H1 (cell line): ENCODE measurements at regions of chr5 and their contacts with region 1.

Region 1: GRCh38 chr5:160199410-160199911 is 29.8 kb upstream of the FABP6 start:
- DNase-seq: peak in 1 of 2 experiments; percentile 93
- H3K4me3 ChIP-seq: peak overlapping the region in 3 of 4 experiments; percentile 5 to 51 (median 22); a peak in 5 of 8 replicates
- H3K27ac ChIP-seq: no peak overlapping the region
- H3K4me1 ChIP-seq: peaks cover 7 to 29% (median 17%) of the 10 kb centered on the region in 4 experiments
- H3K27me3 ChIP-seq: no peaks in the 10 kb centered on the region
- CTCF ChIP-seq: peak; percentile 77 to 90 (median 87)
- EP300 ChIP-seq: peak in 1 of 2 experiments; percentile 81; a peak in 1 of 3 replicates
- POLR2A ChIP-seq: no peak
- RAD21 ChIP-seq: peak; percentile 82 to 90

Region 2: DNA sequence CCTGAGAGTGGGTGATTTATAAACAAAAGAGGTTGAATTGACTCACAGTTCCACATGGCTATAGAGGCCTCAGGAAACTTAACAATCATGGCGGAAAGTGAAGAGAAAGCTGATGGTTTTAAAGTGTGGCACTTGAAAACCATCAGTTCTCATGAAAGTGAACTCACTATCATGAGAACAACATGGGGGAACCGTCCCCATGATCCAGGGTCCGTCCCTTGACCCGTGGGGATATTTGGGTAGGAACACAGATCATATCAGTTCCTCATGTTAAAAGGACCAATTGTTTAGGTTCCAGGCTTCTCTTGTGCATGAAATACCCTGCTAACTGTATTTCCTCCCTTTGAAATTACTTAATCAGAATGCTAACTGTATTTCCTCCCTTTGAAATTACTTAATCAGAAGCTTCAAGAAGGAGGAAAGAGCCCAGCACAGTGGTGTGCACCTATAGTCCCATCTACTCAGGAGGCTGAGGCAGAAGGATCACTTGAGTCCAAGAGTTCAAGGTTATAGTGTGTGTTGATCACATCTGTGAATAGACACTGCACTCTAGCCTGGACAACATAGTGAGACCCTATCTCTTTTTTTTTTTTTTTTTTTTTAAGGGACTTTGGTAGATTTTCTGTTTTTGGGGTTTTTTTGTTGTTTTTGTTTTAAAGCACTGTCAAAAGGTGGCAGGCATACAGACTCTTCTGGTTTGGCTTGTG is 165.8 kb before region 1 on chr5:
- CTCF ChIA-PET with region 1: no interaction called
- POLR2A ChIA-PET with region 1: no interaction called
- DNase-seq: no peak
- H3K4me3 ChIP-seq: no peak overlapping the region
- H3K27ac ChIP-seq: no peak overlapping the region
- H3K4me1 ChIP-seq: no peaks in the 10 kb centered on the region; a peak in 1 of 7 replicates
- H3K27me3 ChIP-seq: peaks cover 0 to 2% (median 0%) of the 10 kb centered on the region in 4 experiments; a peak in 1 of 7 replicates
- CTCF ChIP-seq: no peak
- EP300 ChIP-seq: no peak
- POLR2A ChIP-seq: no peak
- RAD21 ChIP-seq: no peak

Region 3: DNA sequence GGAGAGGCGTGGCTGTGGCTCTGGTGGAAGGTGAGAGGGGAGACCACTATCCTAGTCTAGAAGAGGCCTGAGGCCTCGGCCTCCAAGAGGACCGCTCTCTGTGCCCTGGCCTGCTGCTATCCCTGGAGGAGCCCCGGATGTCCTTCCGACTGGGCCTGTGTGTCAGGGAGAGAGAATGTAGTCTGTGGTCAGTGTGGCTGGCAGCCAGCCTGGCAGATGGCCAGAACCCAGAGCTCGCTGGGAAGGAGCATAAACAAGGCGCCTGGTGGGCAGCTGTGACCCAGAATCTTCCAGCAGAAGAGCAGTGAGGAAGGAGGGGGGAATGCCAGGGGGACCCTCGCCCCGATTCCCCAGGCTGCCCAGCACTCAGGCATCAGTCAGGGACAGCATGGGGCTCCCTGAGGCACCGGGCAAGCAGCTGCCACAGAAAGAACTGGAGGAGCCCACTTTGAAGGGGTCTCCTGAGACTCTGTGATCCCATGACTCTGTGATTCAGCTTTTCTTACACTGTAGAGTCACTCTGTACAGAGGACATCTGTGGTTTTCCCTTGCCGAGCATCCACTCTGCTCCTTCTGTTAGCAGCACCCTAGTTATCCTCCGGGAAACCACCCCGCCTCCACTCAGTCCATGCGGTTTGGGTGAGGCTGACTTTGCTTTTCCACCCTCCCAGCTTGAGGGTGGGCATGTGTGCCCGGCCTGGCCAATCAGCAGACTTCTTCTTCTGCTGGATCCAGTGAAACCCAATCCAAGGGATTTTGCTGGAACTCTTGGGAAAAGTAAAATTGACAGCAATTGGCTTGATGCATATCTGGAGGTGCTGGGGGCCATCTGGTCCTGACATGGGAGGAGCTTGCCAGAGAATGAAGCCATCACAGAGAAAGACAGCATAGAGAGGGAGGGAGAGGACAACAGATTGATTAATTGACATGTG is 34.1 kb before region 1 on chr5:
- CTCF ChIA-PET with region 1: interaction called, 10 read pairs
- POLR2A ChIA-PET with region 1: interaction called, 6 read pairs
- DNase-seq: peak in 1 of 2 experiments; percentile 73
- H3K4me3 ChIP-seq: peak overlapping the region in 2 of 4 experiments; percentile 12 to 48; a peak in 2 of 8 replicates
- H3K27ac ChIP-seq: peak overlapping the region; percentile 90
- H3K4me1 ChIP-seq: peaks cover 20 to 37% (median 28%) of the 10 kb centered on the region in 4 experiments
- H3K27me3 ChIP-seq: no peaks in the 10 kb centered on the region
- CTCF ChIP-seq: no peak
- EP300 ChIP-seq: 0 out of 3 replicates have a peak, but pooled peaks of 1 of the 2 experiments have one; percentile 13
- POLR2A ChIP-seq: peak in 1 of 2 experiments; percentile 73; a peak in 1 of 3 replicates
- RAD21 ChIP-seq: no peak

Region 4: GRCh38 chr5:160188142-160189015 is 11.1 kb before region 1 on chr5:
- CTCF ChIA-PET with region 1: interaction called, 22 read pairs
- POLR2A ChIA-PET with region 1: interaction called, 55 read pairs
- DNase-seq: peak in 1 of 2 experiments; percentile 86
- H3K4me3 ChIP-seq: peak overlapping the region; percentile 27 to 53 (median 31); a peak in 6 of 8 replicates
- H3K27ac ChIP-seq: peak overlapping the region; percentile 81
- H3K4me1 ChIP-seq: peaks cover 0 to 7% (median 3%) of the 10 kb centered on the region in 4 experiments; a peak in 6 of 7 replicates
- H3K27me3 ChIP-seq: no peaks in the 10 kb centered on the region
- CTCF ChIP-seq: no peak
- EP300 ChIP-seq: peak in 1 of 2 experiments; percentile 8; a peak in 1 of 3 replicates
- POLR2A ChIP-seq: peak; percentile 39 to 71
- RAD21 ChIP-seq: peak; percentile 7 to 26; a peak in 1 of 4 replicates

Region 5: DNA sequence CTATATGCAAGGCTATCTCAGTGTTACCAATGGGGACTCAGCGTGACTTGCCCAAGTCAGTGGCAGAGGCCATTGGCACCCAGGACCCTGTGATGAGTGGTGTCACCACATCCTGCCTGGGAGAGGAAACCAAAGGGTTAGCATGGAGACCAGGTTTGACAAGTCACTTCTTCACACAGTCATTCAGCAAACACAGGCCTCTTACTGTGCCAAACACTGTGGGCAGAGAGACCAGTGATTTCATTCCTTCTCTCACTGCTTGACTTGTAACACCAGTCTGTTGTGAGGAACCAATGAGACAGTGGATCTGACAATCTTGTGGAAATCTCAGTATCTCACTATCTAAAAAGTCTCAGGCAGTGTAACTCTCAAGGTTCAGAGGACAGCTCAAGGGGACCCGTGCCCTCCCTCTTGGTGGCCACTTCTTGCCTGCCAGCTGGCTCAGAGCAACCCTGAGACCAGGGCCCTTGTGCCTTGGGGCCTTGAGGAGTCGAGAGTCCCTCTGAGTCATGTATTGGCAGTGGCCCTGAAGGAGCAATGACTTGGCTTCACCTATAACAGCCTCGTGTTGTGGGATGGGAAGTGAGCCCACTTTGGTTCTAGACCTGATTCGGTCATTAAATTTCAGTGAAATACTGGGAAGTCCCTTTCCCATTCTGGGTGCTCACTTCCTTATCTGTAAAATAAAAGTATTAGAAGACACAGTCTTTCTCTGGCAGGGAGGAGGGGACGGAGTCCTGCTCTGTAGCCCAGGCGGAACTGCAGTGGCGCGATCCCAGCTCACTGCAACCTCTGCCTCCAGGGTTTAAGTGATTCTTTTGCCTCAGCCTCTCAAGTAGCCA is 31.4 kb after region 1 on chr5:
- CTCF ChIA-PET with region 1: interaction called, 12 read pairs
- POLR2A ChIA-PET with region 1: no interaction called
- DNase-seq: no peak
- H3K4me3 ChIP-seq: no peak overlapping the region
- H3K27ac ChIP-seq: no peak overlapping the region
- H3K4me1 ChIP-seq: peaks cover 0 to 6% (median 2%) of the 10 kb centered on the region in 4 experiments; a peak in 3 of 7 replicates
- H3K27me3 ChIP-seq: no peaks in the 10 kb centered on the region
- CTCF ChIP-seq: no peak
- EP300 ChIP-seq: no peak
- POLR2A ChIP-seq: no peak
- RAD21 ChIP-seq: no peak

Region 6: GRCh38 chr5:160245506-160246086 is 46.1 kb after region 1 on chr5:
- CTCF ChIA-PET with region 1: interaction called, 51 read pairs
- POLR2A ChIA-PET with region 1: interaction called, 3 read pairs
- DNase-seq: no peak
- H3K4me3 ChIP-seq: no peak overlapping the region
- H3K27ac ChIP-seq: no peak overlapping the region
- H3K4me1 ChIP-seq: peaks cover 0 to 3% (median 0%) of the 10 kb centered on the region in 4 experiments; a peak in 4 of 7 replicates
- H3K27me3 ChIP-seq: no peaks in the 10 kb centered on the region
- CTCF ChIP-seq: no peak
- EP300 ChIP-seq: no peak
- POLR2A ChIP-seq: 0 out of 3 replicates have a peak, but pooled peaks of 1 of the 2 experiments have one; percentile 20
- RAD21 ChIP-seq: no peak

Region 7: DNA sequence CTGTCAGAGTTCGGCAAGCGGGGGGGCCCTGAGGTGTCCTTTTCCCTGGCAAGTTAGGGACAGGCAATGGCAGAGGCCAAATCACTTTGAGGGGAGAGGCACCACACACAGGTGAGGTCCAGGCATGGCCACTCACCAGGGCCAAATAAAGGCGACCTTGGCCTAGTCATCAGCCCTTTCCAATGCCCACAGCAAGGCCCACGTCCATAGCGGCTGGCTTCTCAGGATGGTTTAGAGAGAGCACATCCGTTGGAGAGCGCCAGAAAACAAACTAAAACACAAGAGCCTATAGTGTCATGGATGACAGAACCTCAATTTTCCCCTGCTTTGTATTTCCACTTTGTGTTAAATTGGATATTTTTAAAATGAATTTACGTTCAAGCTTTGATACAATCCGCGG is 105.9 kb after region 1 on chr5:
- CTCF ChIA-PET with region 1: no interaction called
- POLR2A ChIA-PET with region 1: no interaction called
- DNase-seq: no peak
- H3K4me3 ChIP-seq: no peak overlapping the region
- H3K27ac ChIP-seq: no peak overlapping the region
- H3K4me1 ChIP-seq: no peaks in the 10 kb centered on the region; a peak in 1 of 7 replicates
- H3K27me3 ChIP-seq: no peaks in the 10 kb centered on the region
- CTCF ChIP-seq: no peak
- EP300 ChIP-seq: no peak
- POLR2A ChIP-seq: no peak
- RAD21 ChIP-seq: no peak

Region 8: DNA sequence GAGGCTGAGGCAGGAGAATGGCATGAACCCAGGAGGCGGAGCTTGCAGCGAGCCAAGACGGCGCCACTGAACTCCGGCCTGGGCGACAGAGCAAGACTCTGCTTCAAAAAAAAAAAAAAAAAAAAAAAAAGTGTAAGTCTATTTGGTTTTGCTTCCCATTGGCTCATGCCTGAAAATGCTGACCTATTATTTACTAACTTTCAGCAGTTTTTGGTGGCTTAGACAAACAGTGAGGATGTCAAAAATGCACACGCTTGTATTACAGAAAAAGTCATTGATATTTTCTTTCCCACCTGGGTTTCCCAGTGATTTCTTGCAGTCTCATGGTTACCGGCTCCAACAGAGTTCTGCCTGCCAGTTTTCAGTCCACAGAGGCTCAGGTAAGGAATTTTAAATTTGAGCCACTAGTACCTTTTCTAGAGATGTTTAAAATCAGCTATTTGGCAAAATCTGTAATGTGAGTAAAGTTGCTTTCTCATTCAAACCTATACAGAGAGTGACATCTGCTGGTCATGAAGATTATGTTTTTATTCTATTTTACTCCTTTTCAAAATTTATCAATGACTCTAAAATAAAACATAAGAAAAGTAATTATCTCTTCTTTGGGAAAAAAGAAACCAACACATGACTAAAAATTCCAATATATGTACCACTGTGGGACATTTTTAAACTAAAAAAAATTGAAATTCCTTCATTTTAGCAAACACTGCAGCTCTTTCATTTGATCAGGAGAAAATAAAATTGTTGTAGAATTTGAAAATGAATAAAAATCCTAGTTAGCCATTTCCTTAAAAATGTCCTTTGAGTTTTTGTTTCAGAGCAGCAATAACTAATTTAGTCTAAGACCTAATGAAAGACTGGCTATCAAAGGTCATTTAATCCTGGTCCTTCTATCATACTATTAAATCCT is 191.6 kb after region 1 on chr5:
- CTCF ChIA-PET with region 1: interaction called, 14 read pairs
- POLR2A ChIA-PET with region 1: no interaction called
- DNase-seq: no peak
- H3K4me3 ChIP-seq: no peak overlapping the region
- H3K27ac ChIP-seq: no peak overlapping the region
- H3K4me1 ChIP-seq: no peaks in the 10 kb centered on the region
- H3K27me3 ChIP-seq: peaks cover 0 to 1% (median 0%) of the 10 kb centered on the region in 4 experiments; a peak in 1 of 7 replicates
- CTCF ChIP-seq: peak in 2 of 3 experiments; percentile 13 to 29; a peak in 2 of 4 replicates
- EP300 ChIP-seq: no peak
- POLR2A ChIP-seq: no peak
- RAD21 ChIP-seq: peak; percentile 53 to 68